ENCODE measurements at regions of chr2 and their contacts with region 1.

Region 1: DNA sequence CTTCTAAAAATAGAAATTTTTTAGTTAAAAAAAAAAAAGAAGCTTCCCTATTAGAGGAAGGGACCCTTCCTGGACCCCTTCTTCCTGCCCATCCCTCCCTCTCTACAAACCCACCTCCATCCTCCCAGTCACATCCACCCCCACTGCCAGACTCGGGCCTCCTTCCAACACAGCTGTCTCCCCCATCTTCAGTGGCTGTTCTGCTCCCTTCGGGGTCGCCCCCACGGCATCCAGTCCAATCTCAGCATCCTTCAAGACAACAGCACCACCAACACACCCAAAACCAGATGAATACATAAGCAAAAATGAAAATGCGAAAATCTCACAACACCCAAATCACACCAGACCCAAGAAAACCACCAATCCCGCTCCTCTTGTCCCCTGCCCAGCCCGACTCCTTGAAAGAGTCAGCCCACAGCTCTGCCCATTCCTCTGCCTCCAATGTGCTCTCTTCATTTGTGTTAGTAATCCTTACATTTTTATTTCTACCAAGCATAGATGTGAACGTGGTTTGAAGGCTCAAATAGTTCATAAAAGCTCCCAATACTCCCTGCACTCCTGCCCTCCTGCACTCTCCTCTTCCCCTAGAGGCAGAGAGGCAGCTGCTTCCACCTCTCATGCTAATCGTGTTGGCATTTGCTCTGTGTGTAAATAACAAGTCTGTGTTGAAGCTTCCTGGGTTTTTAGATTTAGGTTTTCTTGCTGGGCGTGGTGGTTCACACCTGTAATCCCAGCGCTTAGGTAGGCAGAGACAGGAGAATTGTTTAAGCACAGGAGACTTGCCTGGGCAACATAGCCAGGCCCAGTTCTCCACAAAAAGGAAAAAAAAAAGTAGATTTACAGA is 37.0 kb downstream of the MAL start:
- DNase-seq: no peak
- ATAC-seq: no peak
- H3K4me3 ChIP-seq: peak overlapping the region; percentile 8
- H3K4me3 Mint-ChIP-seq: peak overlapping the region; percentile 42 to 81 (median 78)
- H3K27ac ChIP-seq: peak overlapping the region; percentile 68
- H3K27ac Mint-ChIP-seq: peak overlapping the region; percentile 84 to 95 (median 90)
- H3K4me1 ChIP-seq: peaks cover 0 to 24% of the 10 kb centered on the region in 2 donors
- H3K4me1 Mint-ChIP-seq: peaks cover 24 to 58% (median 50%) of the 10 kb centered on the region in 7 donors
- H3K27me3 ChIP-seq: no peaks in the 10 kb centered on the region
- H3K27me3 Mint-ChIP-seq: no peaks in the 10 kb centered on the region

Region 2: DNA sequence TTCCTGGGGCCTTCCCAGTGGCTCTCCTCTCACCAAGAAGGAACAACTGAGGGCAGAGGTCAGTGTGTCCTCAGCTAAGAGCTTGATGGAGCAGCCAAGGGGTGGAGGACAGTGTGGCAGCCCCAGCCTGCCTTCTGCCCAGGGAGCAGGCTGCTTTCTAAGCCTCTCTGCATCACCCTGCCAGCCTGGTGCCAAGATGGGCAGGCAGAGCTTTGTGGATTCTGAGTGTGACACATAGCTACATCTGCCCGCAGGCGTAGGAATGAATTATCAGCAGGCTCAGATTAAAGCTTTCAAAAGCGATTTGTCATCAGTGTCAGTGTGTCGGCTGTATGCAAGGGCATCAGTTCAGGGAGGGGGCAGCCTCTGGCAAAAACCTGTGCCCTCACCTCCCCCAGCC is 28.2 kb before region 1 on chr2:
- CTCF ChIA-PET with region 1: no interaction called
- POLR2A ChIA-PET with region 1: interaction called, 380 read pairs
- intact Hi-C with region 1: no loop called
- DNase-seq: no peak
- ATAC-seq: no peak
- H3K4me3 ChIP-seq: no peak overlapping the region
- H3K4me3 Mint-ChIP-seq: peak overlapping the region in 6 of 10 donors; percentile 22 to 74 (median 50)
- H3K27ac ChIP-seq: peak overlapping the region; percentile 59
- H3K27ac Mint-ChIP-seq: peak overlapping the region in 8 of 9 donors; percentile 49 to 98 (median 86)
- H3K4me1 ChIP-seq: peaks cover 0 to 86% of the 10 kb centered on the region in 2 donors
- H3K4me1 Mint-ChIP-seq: peaks cover 52 to 99% (median 94%) of the 10 kb centered on the region in 7 donors
- H3K27me3 ChIP-seq: no peaks in the 10 kb centered on the region
- H3K27me3 Mint-ChIP-seq: no peaks in the 10 kb centered on the region